ENCODE measurements at regions of chr11 and their contacts with region 1.

Region 1: GRCh38 chr11:75562048-75562835 is at the start of gene SERPINH1:
- DNase-seq: peak; percentile 90
- H3K4me3 ChIP-seq: peak within 1 kb of the TSS; percentile 65 to 96 (median 73)
- H3K27ac ChIP-seq: peak within 1 kb of the TSS; percentile 96 to 99 (median 98)
- H3K4me1 ChIP-seq: peaks cover 51 to 90% (median 68%) of the 10 kb centered on the region in 4 donors
- H3K27me3 ChIP-seq: no peaks in the 10 kb centered on the region
- CTCF ChIP-seq: no peak
- EP300 ChIP-seq: no peak
- POLR2A ChIP-seq: peak; percentile 94
- total RNA-seq, gene SERPINH1: 34.8 to 169 (median 76.0) TPM

Region 2: DNA sequence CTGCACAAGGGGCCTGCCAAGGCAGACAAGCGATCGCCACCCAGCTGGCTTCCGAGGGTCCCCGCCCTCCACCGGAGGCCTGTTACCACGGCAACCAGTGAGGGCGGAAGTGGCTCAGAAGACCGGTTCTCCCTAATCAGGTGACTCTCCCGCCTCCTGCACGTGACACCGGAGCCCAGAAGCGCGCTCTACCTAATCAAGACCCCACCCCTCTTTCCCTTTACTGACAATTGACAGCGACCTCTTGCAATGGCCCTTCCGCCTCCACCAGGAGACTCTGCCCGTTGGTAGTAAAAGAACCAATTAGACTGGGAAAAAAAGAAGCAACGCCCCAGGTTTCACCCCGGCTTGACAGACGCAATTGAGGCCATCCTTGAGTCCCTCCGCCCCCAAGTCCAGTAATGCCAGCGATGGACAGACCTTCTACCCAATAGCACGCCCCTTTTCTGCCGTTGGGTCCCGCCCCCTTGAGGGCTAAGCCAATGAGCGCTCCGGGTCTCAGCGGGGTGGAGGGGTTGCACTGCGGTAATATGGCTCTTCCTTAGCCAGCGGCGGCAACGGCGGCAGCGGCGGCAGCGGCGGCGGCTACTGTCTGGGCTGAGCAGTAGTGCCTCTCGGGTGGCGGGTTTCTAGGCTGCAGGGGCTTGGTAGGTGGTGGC is 252.6 kb after region 1 on chr11 and contains the start of gene UVRAG:
- in situ Hi-C with region 1: no loop called
- intact Hi-C with region 1: loop called (anchors 5 kb)
- DNase-seq: peak; percentile 99
- H3K4me3 ChIP-seq: peak within 1 kb of the TSS; percentile 81 to 98 (median 92)
- H3K27ac ChIP-seq: peak within 1 kb of the TSS; percentile 96 to 98 (median 97)
- H3K4me1 ChIP-seq: peaks cover 0 to 30% (median 22%) of the 10 kb centered on the region in 4 donors
- H3K27me3 ChIP-seq: no peaks in the 10 kb centered on the region
- CTCF ChIP-seq: peak in 2 of 5 experiments; percentile 58 to 67
- EP300 ChIP-seq: no peak
- POLR2A ChIP-seq: peak; percentile 89
- total RNA-seq, gene UVRAG: 12.7 to 34.6 (median 19.3) TPM